Activated T-helper 2 cell treated with anti-CD3 and anti-CD28 coated beads, Interferon-gamma antibody, Interleukin-2, Interleukin-4, amounts not matched to agents 10 μg/mL and 5 μg/mL and 100 μg/mL, durations not matched to agents 14 hours and 24 hours and 36 hours (primary cell): ENCODE measurements at regions of chr7 and their contacts with region 1.

Region 1: DNA sequence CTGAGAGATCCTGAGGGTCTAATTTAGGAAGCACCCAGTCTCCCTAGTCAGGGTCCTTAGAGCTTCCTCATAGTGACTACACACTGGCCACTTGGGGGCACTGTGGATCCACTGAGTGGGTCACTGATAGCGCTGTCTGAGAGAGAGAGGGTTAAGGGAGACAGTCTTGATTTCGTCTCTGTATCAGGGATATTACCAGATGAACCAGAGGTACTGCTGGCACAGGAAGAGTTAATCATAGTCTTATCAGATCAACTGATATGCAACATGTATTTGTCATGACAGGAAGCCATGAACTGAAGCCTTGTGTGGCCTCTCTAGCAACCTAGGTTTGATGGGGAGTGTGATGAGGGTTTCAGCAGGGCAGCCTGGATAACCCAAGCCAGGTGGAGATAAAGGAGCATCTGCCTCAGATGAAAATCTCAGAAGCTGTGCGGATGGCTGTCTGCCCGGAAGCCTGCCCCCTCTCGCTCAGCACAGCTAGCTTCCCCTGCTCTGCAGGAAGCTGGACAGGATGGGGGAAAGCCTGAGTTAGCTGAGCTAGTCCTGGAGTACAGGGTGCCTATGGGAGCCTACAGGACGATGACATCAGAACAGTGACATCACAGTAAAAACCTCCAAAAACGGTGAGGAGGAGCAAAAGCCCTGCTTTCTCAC is 214.0 kb upstream of the PRSS1 start:
- DNase-seq: peak; percentile 70
- H3K4me3 Mint-ChIP-seq: peak overlapping the region; percentile 28
- H3K27ac Mint-ChIP-seq: peak overlapping the region; percentile 82
- H3K4me1 Mint-ChIP-seq: peaks cover 26% of the 10 kb centered on the region
- H3K27me3 Mint-ChIP-seq: peaks cover 3% of the 10 kb centered on the region

Region 2: GRCh38 chr7:142301923-142302550 is 233.2 kb before region 1 on chr7:
- intact Hi-C with region 1: no loop called
- DNase-seq: no peak
- H3K4me3 Mint-ChIP-seq: no peak overlapping the region
- H3K27ac Mint-ChIP-seq: no peak overlapping the region
- H3K4me1 Mint-ChIP-seq: peaks cover 1% of the 10 kb centered on the region
- H3K27me3 Mint-ChIP-seq: peaks cover 24% of the 10 kb centered on the region

Region 3: GRCh38 chr7:142557971-142558582 is 22.8 kb after region 1 on chr7:
- intact Hi-C with region 1: loop called (anchors 1 kb)
- DNase-seq: peak; percentile 31
- H3K4me3 Mint-ChIP-seq: peak overlapping the region; percentile 6
- H3K27ac Mint-ChIP-seq: no peak overlapping the region
- H3K4me1 Mint-ChIP-seq: peaks cover 19% of the 10 kb centered on the region
- H3K27me3 Mint-ChIP-seq: peaks cover 12% of the 10 kb centered on the region

Region 4: GRCh38 chr7:142587578-142588191 is 52.4 kb after region 1 on chr7:
- intact Hi-C with region 1: loop called (anchors 1 kb)
- DNase-seq: no peak
- H3K4me3 Mint-ChIP-seq: no peak overlapping the region
- H3K27ac Mint-ChIP-seq: no peak overlapping the region
- H3K4me1 Mint-ChIP-seq: peaks cover 22% of the 10 kb centered on the region
- H3K27me3 Mint-ChIP-seq: no peaks in the 10 kb centered on the region

Region 5: GRCh38 chr7:142603870-142604448 is 68.7 kb after region 1 on chr7:
- intact Hi-C with region 1: loop called (anchors 1 kb)
- DNase-seq: peak; percentile 22
- H3K4me3 Mint-ChIP-seq: no peak overlapping the region
- H3K27ac Mint-ChIP-seq: no peak overlapping the region
- H3K4me1 Mint-ChIP-seq: peaks cover 9% of the 10 kb centered on the region
- H3K27me3 Mint-ChIP-seq: peaks cover 26% of the 10 kb centered on the region

Region 6: DNA sequence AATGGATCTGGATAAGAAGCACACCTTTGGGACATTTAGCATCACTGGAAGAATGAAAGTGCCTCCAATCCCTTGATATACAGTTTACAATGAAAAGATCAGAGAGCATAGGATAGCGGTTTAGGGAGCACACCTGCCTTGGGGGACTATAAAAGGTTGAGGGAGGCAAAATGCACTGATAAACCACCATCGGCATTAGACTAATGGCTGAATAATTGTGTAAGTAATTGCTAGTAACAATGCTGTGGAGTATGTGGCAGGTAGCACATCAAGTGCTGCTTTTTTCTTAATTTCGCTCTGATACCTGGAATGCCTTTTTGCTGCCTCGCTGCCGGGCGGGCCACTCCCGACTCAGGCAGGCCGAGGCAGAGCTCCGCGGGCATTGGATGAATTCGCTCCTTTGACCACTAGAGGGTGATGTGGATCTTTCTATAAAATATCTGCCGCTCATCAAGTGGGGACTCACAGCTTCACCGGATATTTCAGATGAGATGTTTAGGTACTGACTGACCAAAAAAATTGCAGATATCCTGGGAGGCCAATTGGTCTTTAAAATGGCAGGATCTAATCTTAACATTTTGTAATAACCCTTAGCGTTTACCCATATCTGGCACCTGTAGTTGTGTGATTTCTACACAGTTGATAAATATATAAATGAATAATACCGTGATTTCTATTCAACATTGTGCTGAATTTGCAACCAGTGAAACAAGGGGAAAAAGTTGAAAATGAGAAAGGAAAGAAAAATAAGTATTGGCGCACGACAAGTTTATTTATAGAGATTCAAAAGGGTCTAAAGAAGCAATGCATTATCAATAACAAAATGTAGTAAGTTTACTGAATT is 97.3 kb after region 1 on chr7:
- intact Hi-C with region 1: loop called (anchors 5 kb)
- DNase-seq: peak; percentile 33
- H3K4me3 Mint-ChIP-seq: no peak overlapping the region
- H3K27ac Mint-ChIP-seq: no peak overlapping the region
- H3K4me1 Mint-ChIP-seq: peaks cover 11% of the 10 kb centered on the region
- H3K27me3 Mint-ChIP-seq: peaks cover 16% of the 10 kb centered on the region